ENCODE measurements at regions of chr21 and their contacts with region 1.

Region 1: GRCh38 chr21:29298348-29299045 is at the start of gene BACH1:
- DNase-seq: peak; percentile 86
- ATAC-seq: peak; percentile 51
- H3K4me3 Mint-ChIP-seq: peak within 1 kb of the TSS; percentile 97
- H3K27ac Mint-ChIP-seq: peak within 1 kb of the TSS; percentile 99
- H3K4me1 Mint-ChIP-seq: peaks cover 74% of the 10 kb centered on the region
- H3K27me3 Mint-ChIP-seq: no peaks in the 10 kb centered on the region
- CTCF ChIP-seq: no peak
- total RNA-seq, gene BACH1: 141 and 152 TPM in 2 replicates

Region 2: DNA sequence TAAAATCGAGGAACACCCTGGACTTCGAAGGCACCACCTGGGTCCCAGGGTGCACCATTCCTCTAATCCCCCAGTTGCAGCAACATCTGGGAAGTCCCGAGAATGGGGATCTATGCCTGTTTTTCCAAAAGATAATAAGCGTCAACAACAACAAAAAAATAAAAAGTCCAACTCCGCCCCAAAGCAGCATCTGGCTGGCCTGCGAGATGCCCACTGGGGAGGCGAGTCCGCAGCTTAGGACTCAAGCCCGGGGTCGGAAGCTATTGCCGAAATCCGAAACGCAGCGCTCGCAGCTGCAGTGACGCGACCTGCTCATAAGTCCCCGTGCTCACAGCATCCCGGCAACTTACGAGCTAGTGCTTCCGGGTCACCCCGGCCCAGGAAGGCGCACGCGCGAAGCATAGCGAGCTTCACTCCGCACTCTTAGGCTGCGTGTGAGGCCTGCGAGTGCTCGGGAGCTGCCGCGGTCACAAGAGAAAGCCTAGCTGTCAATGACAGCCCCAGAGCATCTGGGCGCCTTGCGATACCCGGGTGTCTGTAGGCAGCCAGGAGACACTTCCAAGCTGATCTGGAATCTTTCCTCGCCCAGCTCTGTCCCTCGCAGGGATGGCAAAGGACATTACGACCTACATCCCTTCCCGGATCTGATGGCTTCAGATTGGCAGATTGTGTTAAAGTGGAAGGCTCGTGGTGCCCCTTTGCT is 295.9 kb before region 1 on chr21:
- CTCF ChIA-PET with region 1: no interaction called
- POLR2A ChIA-PET with region 1: interaction called, 12 read pairs
- intact Hi-C with region 1: loop called (anchors 1 kb)
- DNase-seq: peak; percentile 90
- ATAC-seq: peak; percentile 100
- H3K4me3 Mint-ChIP-seq: peak overlapping the region; percentile 90
- H3K27ac Mint-ChIP-seq: peak overlapping the region; percentile 95
- H3K4me1 Mint-ChIP-seq: peaks cover 12% of the 10 kb centered on the region
- H3K27me3 Mint-ChIP-seq: no peaks in the 10 kb centered on the region
- CTCF ChIP-seq: no peak

Region 3: DNA sequence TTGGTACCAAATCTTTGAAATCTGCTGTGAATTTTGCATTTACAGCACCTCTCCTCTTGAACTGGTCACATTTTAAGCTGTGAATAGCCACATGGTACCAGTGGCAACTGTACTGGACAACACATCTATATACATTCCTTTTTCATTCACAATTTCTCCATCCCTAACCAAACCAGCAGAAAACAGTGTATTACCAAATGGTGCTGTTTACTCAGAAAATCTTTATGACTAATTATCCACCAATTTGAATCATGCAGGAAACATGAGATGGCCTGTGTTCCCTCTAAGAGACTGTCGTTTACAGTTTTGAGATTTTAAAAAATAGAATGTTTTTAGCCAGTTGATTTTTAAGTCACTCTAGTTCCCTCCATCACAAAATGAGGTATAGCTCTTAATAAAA is 207.5 kb before region 1 on chr21:
- CTCF ChIA-PET with region 1: interaction called, 6 read pairs
- POLR2A ChIA-PET with region 1: interaction called, 5 read pairs
- intact Hi-C with region 1: loop called (anchors 1 kb)
- DNase-seq: no peak
- ATAC-seq: no peak
- H3K4me3 Mint-ChIP-seq: no peak overlapping the region
- H3K27ac Mint-ChIP-seq: no peak overlapping the region
- H3K4me1 Mint-ChIP-seq: no peaks in the 10 kb centered on the region
- H3K27me3 Mint-ChIP-seq: no peaks in the 10 kb centered on the region
- CTCF ChIP-seq: no peak

Region 4: GRCh38 chr21:29175408-29176134 is 122.9 kb before region 1 on chr21:
- CTCF ChIA-PET with region 1: interaction called, 3 read pairs
- POLR2A ChIA-PET with region 1: interaction called, 8 read pairs
- intact Hi-C with region 1: loop called (anchors 1 kb)
- DNase-seq: no peak
- ATAC-seq: no peak
- H3K4me3 Mint-ChIP-seq: peak overlapping the region; percentile 52
- H3K27ac Mint-ChIP-seq: peak overlapping the region; percentile 24
- H3K4me1 Mint-ChIP-seq: peaks cover 27% of the 10 kb centered on the region
- H3K27me3 Mint-ChIP-seq: no peaks in the 10 kb centered on the region
- CTCF ChIP-seq: no peak

Region 5: DNA sequence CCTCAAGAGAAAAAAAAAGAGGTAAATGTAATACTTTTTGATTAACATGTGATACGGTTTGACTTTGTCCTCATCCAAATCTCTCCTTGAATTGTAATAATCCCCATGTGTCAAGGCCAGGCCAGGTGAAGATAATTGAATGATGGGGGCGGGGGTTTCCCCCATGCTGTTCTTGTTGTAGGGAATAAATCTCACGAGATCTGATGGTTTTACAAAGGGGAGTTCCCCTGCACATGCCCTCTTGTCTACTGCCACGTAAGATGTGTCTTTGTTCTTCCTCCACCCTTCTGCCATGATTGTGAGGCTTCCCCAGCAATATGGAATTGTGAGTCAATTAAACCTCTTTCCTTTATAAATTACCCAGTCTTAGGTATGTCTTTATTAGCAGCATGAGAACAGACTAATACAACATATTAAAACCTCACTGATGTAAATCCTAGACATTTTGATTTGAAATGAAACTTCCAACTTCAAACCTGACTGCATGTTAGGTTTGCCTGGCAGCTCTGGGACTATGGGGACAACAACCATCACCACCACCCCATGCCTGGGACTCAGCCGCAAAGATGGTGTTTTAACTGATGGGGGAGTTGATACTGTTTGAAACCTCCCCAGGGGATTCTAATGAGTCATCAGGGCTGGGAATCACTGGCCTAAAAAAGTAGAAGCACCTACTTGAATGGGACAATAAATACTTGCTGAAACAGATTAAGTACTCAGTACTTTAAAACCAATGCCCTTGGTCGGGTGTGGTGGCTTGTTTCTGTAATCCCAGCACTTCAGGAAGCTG is 32.6 kb before region 1 on chr21:
- CTCF ChIA-PET with region 1: no interaction called
- POLR2A ChIA-PET with region 1: interaction called, 15 read pairs
- intact Hi-C with region 1: loop called (anchors 1 kb)
- DNase-seq: no peak
- ATAC-seq: peak; percentile 86
- H3K4me3 Mint-ChIP-seq: peak overlapping the region; percentile 17
- H3K27ac Mint-ChIP-seq: peak overlapping the region; percentile 82
- H3K4me1 Mint-ChIP-seq: peaks cover 21% of the 10 kb centered on the region
- H3K27me3 Mint-ChIP-seq: no peaks in the 10 kb centered on the region
- CTCF ChIP-seq: no peak

Region 6: GRCh38 chr21:29372063-29372802 is 73.7 kb after region 1 on chr21:
- CTCF ChIA-PET with region 1: interaction called, 13 read pairs
- POLR2A ChIA-PET with region 1: interaction called, 10 read pairs
- intact Hi-C with region 1: loop called (anchors 1 kb)
- DNase-seq: no peak
- ATAC-seq: peak; percentile 83
- H3K4me3 Mint-ChIP-seq: no peak overlapping the region
- H3K27ac Mint-ChIP-seq: peak overlapping the region; percentile 46
- H3K4me1 Mint-ChIP-seq: peaks cover 13% of the 10 kb centered on the region
- H3K27me3 Mint-ChIP-seq: no peaks in the 10 kb centered on the region
- CTCF ChIP-seq: peak; percentile 66

Region 7: DNA sequence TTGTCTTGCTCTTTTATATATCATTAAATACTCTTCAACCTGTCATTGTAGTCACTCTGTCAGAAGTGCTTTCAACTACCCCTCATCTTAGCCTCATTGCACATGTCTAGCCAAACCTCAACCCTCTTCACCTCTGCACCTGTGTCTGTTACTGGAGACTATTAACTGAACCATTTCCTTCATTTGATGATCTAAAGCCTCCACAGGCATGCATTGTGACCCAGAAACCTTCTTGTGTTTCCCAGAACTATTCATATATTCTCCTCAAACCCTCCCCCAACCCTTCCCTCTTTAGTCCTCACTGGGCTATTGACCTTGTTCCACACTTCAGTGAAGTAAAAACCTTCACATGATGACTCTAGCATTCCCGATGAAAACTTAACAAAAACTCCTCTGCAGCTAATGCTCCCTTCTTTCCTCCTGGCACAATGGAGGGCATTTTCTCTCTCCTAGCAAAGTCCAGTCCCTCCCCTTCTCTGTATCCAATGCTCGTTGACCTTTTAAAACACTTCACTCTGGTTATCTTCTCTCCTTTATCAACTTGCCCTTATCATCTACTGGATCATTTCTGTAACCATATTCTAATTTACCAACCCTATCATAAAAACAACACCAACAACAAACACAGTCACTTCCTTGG is 86.3 kb after region 1 on chr21:
- CTCF ChIA-PET with region 1: no interaction called
- POLR2A ChIA-PET with region 1: no interaction called
- intact Hi-C with region 1: no loop called
- DNase-seq: no peak
- ATAC-seq: no peak
- H3K4me3 Mint-ChIP-seq: no peak overlapping the region
- H3K27ac Mint-ChIP-seq: no peak overlapping the region
- H3K4me1 Mint-ChIP-seq: no peaks in the 10 kb centered on the region
- H3K27me3 Mint-ChIP-seq: no peaks in the 10 kb centered on the region
- CTCF ChIP-seq: no peak

Measured in activated B cell treated with CpG ODN at 0.5 μM for 24 hours (primary cell).